ENCODE measurements at regions of chr9 and their contacts with region 1.

Region 1: DNA sequence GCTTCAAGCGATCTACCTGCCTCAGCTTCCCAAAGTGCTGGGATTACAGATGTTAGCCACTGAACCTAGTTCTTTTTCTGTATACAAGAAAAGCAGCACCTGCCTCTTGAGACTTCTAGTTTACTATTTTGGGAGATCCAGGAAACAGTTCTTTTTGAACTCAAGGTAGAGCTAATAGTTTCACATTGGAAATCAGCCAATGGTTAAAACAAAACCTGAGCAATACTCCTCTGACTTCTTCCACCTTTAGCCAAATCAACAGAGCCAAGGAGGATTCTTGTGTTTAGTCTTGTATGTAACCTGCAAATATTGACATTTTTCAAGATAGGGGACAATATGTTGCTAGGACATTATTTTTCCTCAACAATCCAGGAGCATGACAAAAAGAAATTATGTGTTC is 349.4 kb downstream of the SH3GL2 start:
- DNase-seq: no peak
- ATAC-seq: no peak
- H3K4me3 ChIP-seq: no peak overlapping the region
- H3K27ac ChIP-seq: no peak overlapping the region
- H3K4me1 ChIP-seq: no peaks in the 10 kb centered on the region
- H3K27me3 ChIP-seq: no peaks in the 10 kb centered on the region
- CTCF ChIP-seq: no peak
- EP300 ChIP-seq: no peak
- POLR2A ChIP-seq: no peak
- RAD21 ChIP-seq: no peak

Region 2: GRCh38 chr9:17852108-17852507 is 76.1 kb before region 1 on chr9:
- CTCF ChIA-PET with region 1: no interaction called
- POLR2A ChIA-PET with region 1: no interaction called
- in situ Hi-C with region 1: no loop called
- intact Hi-C with region 1: loop called (anchors 10 kb)
- DNase-seq: no peak
- ATAC-seq: no peak
- H3K4me3 ChIP-seq: no peak overlapping the region
- H3K27ac ChIP-seq: no peak overlapping the region
- H3K4me1 ChIP-seq: no peaks in the 10 kb centered on the region
- H3K27me3 ChIP-seq: no peaks in the 10 kb centered on the region
- CTCF ChIP-seq: no peak
- EP300 ChIP-seq: no peak
- POLR2A ChIP-seq: no peak
- RAD21 ChIP-seq: no peak